ENCODE measurements at regions of chr14 and their contacts with region 1.

Region 1: DNA sequence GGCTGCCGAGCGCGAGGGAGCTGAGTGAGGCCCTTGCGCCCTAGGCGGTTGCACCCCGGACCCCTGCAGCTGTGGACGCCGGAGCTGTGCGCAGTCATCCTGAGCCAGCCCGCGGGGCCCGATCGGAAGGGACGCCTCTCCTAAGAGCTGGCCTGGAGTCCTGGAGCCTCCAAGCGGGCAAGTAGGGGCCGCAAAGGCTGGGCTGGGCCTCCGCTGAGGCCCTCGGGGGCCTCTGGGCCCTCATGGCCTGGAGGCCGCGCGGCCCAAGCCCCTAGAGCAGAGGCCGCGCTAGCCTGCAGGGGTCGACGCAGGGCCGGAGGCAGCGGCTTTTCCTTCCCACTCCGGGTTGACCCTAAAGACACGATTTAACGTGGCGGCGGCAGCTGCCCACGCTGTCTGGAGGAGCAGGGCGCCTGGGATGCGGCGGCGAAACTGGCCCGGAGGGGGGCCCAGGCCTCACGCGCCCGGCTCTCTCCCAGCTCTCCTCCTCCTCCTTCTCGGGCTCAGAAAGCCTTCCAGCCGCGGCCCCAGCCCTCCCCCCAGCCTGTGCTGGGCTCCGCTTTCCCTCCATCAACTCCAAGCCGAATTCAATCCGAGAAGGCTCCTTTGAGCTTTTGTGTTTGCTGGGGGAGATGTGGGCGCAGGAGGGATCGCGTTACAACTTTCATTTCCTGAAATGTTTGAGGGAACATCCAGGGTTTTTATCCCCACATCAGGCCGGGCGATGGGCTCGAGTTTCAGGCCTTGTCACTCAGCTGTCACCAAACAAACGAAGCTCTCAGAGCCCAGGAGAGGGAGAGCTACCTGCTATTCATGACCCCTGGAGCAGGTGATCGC is 11.6 kb downstream of the SIX1 start:
- DNase-seq: peak; percentile 15
- ATAC-seq: no peak
- H3K4me3 Mint-ChIP-seq: peak overlapping the region; percentile 21
- H3K27ac Mint-ChIP-seq: no peak overlapping the region
- H3K4me1 Mint-ChIP-seq: peaks cover 21% of the 10 kb centered on the region
- H3K27me3 Mint-ChIP-seq: peaks cover 58% of the 10 kb centered on the region

Region 2: GRCh38 chr14:60508707-60509437 is 128.8 kb before region 1 on chr14 and contains the start of gene SIX6:
- CTCF ChIA-PET with region 1: no interaction called
- POLR2A ChIA-PET with region 1: no interaction called
- intact Hi-C with region 1: loop called in 1 of 2 experiments (anchors 2 kb)
- DNase-seq: peak; percentile 48
- ATAC-seq: no peak
- H3K4me3 Mint-ChIP-seq: peak within 1 kb of the TSS; percentile 10
- H3K27ac Mint-ChIP-seq: no peak within 1 kb of the TSS
- H3K4me1 Mint-ChIP-seq: peaks cover 23% of the 10 kb centered on the region
- H3K27me3 Mint-ChIP-seq: peaks cover 71% of the 10 kb centered on the region
- total RNA-seq, gene SIX6: not detected

Region 3: DNA sequence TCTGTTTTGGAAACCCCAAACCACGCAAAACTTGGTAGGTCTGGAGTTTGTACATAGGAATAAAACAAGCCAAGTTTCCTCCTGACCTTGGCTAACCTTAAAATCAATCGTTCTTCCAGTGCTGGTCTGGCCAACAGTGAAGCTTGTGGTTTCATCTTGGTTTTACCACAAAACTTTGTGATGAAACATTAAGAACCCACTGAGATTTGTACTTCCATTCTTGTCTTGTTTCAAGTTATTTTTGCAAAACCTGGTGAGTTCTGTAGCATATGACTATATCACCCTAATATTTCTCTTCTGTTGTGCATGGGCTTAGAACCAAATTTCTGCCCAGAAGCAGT is 14.8 kb before region 1 on chr14:
- CTCF ChIA-PET with region 1: interaction called, 11 read pairs
- POLR2A ChIA-PET with region 1: no interaction called
- intact Hi-C with region 1: no loop called
- DNase-seq: no peak
- ATAC-seq: no peak
- H3K4me3 Mint-ChIP-seq: no peak overlapping the region
- H3K27ac Mint-ChIP-seq: no peak overlapping the region
- H3K4me1 Mint-ChIP-seq: no peaks in the 10 kb centered on the region
- H3K27me3 Mint-ChIP-seq: peaks cover 18% of the 10 kb centered on the region

Region 4: DNA sequence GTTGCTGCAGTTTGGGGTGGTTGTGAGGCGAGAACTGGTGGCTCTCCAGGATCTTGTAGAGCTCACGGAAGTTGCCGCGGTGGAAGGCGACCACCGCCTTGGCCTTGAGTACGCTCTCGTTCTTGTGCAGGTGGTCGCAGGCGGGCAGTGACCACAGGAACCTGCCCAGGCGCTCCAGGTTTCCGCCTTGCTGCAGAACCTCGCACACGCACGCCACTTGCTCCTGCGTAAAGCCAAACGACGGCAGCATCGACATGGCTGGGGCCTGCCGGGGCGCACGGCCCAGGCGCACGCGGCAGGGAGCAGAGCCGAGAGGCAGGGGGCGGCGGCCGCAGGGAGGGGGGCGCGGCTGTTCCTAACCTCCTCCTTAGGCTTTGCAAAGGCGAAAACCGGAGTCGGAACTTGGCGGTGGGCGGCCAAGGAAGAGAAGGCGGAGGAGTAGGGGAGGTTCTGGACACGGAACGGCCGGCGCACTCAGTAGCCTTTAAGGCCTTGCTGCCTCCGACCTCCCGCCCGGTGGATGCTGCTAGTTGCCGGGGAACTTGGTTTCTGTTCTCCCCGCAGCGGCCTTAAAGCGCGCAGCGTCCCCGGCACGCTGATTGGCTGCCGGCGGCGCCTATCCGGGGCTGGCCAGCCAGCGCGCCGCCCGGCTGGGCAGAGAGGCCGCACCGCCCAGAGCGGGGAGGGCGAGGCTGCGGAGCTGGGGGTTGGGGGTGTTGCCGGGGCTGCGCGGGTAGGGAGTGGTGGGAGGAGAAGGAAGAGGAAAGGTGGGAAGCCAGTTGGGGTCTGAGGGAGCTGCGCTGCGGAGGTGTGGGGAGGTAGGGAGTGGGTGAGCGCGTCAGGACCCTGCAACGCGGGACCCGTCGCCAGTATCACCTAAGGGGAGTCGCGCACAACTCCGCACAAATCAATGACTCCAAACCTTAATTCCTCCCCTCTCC is 11.5 kb after region 1 on chr14 and contains the start of gene SIX1:
- CTCF ChIA-PET with region 1: interaction called, 4 read pairs
- POLR2A ChIA-PET with region 1: no interaction called
- intact Hi-C with region 1: loop called in 1 of 2 experiments (anchors 1 kb)
- DNase-seq: peak; percentile 48
- ATAC-seq: peak; percentile 43
- H3K4me3 Mint-ChIP-seq: peak within 1 kb of the TSS; percentile 32
- H3K27ac Mint-ChIP-seq: no peak within 1 kb of the TSS
- H3K4me1 Mint-ChIP-seq: peaks cover 44% of the 10 kb centered on the region
- H3K27me3 Mint-ChIP-seq: peaks cover 84% of the 10 kb centered on the region
- total RNA-seq, gene SIX1: not detected

Region 5: GRCh38 chr14:60656686-60657455 is 19.2 kb after region 1 on chr14:
- CTCF ChIA-PET with region 1: interaction called, 3 read pairs
- POLR2A ChIA-PET with region 1: no interaction called
- intact Hi-C with region 1: loop called in 1 of 2 experiments (anchors 2 kb)
- DNase-seq: peak; percentile 55
- ATAC-seq: peak; percentile 66
- H3K4me3 Mint-ChIP-seq: peak overlapping the region; percentile 71
- H3K27ac Mint-ChIP-seq: no peak overlapping the region
- H3K4me1 Mint-ChIP-seq: peaks cover 37% of the 10 kb centered on the region
- H3K27me3 Mint-ChIP-seq: peaks cover 79% of the 10 kb centered on the region

Measured in activated CD4-positive, alpha-beta T cell treated with anti-CD3 and anti-CD28 coated beads for 36 hours (primary cell).